OCI-LY7 (cell line): ENCODE measurements at regions of chr16 and their contacts with region 1.

Region 1: DNA sequence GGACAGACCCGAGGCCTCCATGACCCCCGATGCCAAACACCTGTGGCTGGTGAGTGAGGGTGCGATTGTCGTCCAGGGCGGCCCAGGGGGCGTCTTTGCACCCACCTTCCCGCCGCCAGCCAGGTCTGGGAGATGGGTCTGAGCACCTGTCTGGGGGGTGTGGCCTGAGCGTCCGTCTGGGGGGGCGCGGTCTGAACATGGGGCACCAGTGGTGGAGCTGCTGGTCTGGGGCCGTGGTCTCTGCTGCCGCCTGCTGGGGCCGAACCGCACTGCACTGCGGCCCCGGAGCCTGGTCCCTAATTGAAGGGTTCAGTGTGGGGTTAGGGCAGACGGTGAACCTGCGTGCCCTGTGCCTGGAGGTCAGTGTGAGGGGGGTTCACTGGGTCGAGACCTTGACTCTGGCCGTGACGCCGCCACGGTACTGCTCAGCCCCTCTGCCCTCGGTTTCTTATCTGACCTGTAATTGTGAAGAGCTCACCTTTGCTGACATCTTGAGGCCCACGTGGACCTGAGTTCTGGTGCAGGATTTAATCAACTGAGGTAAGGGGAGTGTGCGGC is 12.6 kb upstream of the TCF25 start:
- DNase-seq: peak; percentile 77
- H3K4me3 ChIP-seq: no peak overlapping the region
- H3K27ac ChIP-seq: no peak overlapping the region
- H3K4me1 ChIP-seq: peaks cover 53% of the 10 kb centered on the region
- CTCF ChIP-seq: peak; percentile 96

Region 2: DNA sequence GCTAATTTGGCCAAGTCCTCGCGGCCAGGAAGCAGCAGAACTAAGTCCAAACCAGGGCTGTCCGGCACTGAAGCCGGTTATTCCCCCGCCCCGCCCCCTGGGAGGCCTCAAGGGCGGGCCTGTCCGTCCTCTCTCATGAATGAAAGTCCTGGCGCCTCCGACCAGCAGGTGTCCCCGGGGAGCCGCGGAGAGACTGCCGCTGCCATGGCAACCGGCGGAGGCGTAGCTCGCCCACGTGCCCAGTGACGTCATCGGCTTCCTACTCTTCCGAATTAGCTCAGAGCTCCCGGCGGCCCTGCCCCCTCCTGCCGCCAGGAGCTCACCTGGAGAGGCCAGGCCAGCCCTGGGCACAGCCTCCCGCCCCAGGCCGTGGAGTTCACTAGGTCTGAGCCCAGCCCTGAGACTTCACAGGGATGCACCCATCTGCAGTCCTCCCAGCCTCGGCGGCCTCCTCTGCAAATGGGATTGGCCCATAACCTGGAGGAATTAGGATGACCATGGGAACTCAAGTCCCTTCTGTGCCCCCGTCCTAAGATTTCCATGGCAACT is 160.7 kb before region 1 on chr16:
- CTCF ChIA-PET with region 1: interaction called, 3 read pairs
- POLR2A ChIA-PET with region 1: interaction called, 4 read pairs
- intact Hi-C with region 1: loop called (anchors 2 kb)
- DNase-seq: peak; percentile 99
- H3K4me3 ChIP-seq: peak overlapping the region; percentile 74
- H3K27ac ChIP-seq: peak overlapping the region; percentile 55
- H3K4me1 ChIP-seq: peaks cover 31% of the 10 kb centered on the region
- CTCF ChIP-seq: peak; percentile 72

Region 3: DNA sequence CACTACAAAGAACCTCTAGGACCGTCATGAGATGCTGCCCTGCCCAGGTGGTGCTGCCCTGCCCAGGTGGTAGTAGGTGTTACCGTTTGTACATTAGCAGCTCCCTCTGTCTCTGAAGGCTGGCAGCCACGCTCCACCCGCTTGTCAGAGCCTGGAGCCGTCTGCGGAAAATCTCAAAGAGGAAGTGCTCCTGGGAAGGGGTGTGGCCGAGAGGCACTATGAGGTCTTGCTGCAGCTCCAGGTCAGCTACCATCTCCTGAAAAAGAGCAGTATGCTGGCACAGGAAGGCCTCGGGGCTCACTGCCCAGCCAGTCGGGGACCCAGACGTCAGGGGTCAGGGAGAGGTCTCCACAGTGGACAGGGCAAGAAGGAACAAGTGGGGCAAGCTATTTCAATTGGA is 111.2 kb before region 1 on chr16:
- CTCF ChIA-PET with region 1: no interaction called
- POLR2A ChIA-PET with region 1: no interaction called
- intact Hi-C with region 1: loop called (anchors 5 kb)
- DNase-seq: no peak
- H3K4me3 ChIP-seq: no peak overlapping the region
- H3K27ac ChIP-seq: no peak overlapping the region
- H3K4me1 ChIP-seq: no peaks in the 10 kb centered on the region
- CTCF ChIP-seq: no peak

Region 4: DNA sequence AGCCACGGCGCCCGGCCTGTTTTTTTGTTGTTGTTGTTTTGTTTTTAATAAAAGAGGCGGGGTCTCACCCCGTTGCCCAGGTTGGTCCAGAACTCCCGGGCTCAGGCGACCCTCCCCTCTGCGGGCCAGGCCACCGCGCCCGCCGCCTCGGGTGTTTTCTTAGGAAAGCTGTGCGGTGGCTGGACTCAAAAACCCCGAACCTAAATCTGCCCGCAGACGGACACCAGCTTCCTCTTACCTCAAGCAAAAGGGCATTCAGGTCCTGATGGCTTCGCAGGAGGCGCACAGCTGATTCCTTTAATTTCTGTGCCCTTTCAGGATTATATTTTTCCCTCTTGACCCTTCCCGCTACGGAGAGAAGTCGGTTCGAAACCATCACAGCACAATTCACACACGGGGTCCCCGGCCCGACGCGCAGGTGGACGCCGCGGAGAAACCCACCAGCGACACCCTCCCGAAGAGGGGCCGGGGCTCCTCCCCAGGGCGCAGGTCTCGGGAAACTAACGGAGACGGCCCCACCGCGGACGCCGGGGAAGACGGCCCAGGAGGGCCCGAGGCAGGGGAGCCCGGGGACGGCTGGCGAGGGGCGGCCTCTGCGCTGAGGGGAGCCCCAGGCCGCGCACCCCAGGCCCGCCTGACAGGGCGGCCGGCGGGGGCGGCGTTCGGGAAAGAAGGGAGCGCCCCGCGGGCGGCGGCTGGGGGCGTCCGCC is 45.0 kb before region 1 on chr16:
- CTCF ChIA-PET with region 1: no interaction called
- POLR2A ChIA-PET with region 1: interaction called, 6 read pairs
- intact Hi-C with region 1: loop called (anchors 2 kb)
- DNase-seq: peak; percentile 54
- H3K4me3 ChIP-seq: peak overlapping the region; percentile 100
- H3K27ac ChIP-seq: peak overlapping the region; percentile 92
- H3K4me1 ChIP-seq: peaks cover 65% of the 10 kb centered on the region
- CTCF ChIP-seq: no peak

Region 5: GRCh38 chr16:89829640-89830437 is 31.0 kb before region 1 on chr16:
- CTCF ChIA-PET with region 1: no interaction called
- POLR2A ChIA-PET with region 1: no interaction called
- intact Hi-C with region 1: no loop called
- DNase-seq: no peak
- H3K4me3 ChIP-seq: no peak overlapping the region
- H3K27ac ChIP-seq: no peak overlapping the region
- H3K4me1 ChIP-seq: no peaks in the 10 kb centered on the region
- CTCF ChIP-seq: no peak

Region 6: GRCh38 chr16:89873972-89874689 is 13.3 kb after region 1 on chr16:
- CTCF ChIA-PET with region 1: no interaction called
- POLR2A ChIA-PET with region 1: interaction called, 11 read pairs
- intact Hi-C with region 1: no loop called
- DNase-seq: peak; percentile 92
- H3K4me3 ChIP-seq: peak overlapping the region; percentile 89
- H3K27ac ChIP-seq: peak overlapping the region; percentile 89
- H3K4me1 ChIP-seq: peaks cover 20% of the 10 kb centered on the region
- CTCF ChIP-seq: no peak